Caco-2 (cell line): ENCODE measurements at regions of chr10 and their contacts with region 1.

Region 1: DNA sequence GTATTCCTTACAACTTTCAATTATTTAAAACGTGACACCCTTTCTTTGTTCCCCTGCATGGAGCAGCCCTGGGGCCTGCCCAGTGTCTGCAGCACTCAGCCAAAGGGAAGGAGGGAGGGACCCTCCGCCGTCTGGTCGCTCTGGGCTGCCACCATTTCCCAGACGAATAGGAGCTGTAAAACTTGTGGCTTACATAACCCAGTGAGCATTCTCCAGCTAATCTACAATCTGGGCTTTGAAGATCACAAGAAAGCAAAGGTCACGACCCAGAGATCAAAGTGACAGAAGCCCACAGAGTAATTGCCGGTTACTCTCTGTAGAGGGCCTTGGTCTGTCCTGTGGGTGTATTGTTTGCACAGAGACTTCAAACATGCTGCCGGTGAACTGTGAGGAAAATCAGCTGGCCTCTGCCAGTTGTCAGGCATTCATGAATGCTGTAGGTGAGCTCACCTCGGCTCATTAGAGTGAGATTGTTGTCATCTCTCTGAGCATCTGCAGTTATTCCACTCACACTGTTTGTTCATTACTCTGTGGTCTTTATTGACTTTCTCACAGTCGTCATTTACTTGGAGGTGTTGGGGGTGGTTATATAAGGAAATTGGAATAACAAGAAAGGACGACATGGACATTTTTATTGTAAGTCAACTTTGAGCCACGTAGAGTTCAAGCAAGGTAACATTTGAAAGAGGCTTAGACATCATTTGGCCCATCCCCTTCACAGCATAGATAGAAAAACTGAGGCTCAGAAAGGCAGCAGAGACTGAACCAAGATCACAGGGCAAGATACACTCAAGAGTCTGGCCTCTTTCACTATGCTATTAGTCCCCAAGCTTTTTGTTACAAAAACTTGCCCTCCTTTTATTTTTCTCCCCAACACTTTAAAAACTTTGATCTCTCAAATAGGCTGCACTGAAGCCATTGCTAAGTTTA is 619.8 kb downstream of the LRMDA start:
- DNase-seq: peak; percentile 95 to 97
- H3K4me3 ChIP-seq: no peak overlapping the region
- H3K4me3 Mint-ChIP-seq: peak overlapping the region; percentile 56
- H3K27ac Mint-ChIP-seq: peak overlapping the region; percentile 93
- H3K4me1 ChIP-seq: peaks cover 39% of the 10 kb centered on the region
- H3K4me1 Mint-ChIP-seq: peaks cover 36% of the 10 kb centered on the region
- H3K27me3 ChIP-seq: no peaks in the 10 kb centered on the region
- H3K27me3 Mint-ChIP-seq: no peaks in the 10 kb centered on the region
- CTCF ChIP-seq: peak in 1 of 2 experiments; percentile 17

Region 2: DNA sequence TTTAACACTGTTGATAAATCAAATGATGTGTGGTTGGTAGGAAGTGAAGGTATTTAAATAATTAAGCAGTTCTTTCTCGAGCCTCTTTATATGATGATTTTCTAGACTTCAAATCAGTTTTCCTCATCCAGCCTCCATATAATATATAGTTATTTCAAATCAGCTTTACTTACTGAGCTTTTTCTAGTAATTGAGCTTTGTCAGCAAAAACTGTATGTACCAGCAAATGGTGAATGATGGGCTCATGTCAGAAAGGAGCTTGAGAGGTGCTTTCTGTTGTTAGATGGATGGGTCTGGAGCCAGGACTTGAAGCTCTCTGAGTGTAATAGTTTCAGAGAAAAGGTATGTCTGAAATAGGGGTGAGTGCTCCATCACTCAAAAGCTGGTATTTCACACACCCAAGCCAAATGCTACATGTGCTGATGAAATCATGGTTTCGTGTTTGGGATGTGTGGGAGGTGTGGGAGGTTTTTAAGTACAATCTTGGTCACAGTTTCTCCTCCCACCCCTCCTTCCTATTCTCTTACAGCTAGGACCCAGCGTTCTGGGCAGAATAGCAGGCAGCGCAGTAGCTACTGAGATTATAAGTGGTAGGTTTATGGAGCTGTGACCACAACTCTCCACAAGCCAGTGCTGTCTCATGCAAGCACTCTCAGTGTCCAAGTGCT is 564.1 kb before region 1 on chr10:
- CTCF ChIA-PET with region 1: no interaction called
- POLR2A ChIA-PET with region 1: no interaction called
- intact Hi-C with region 1: no loop called
- DNase-seq: no peak
- H3K4me3 ChIP-seq: no peak overlapping the region
- H3K4me3 Mint-ChIP-seq: no peak overlapping the region
- H3K27ac Mint-ChIP-seq: no peak overlapping the region
- H3K4me1 ChIP-seq: no peaks in the 10 kb centered on the region
- H3K4me1 Mint-ChIP-seq: no peaks in the 10 kb centered on the region
- H3K27me3 ChIP-seq: no peaks in the 10 kb centered on the region
- H3K27me3 Mint-ChIP-seq: no peaks in the 10 kb centered on the region
- CTCF ChIP-seq: no peak

Region 3: GRCh38 chr10:76036111-76036940 is 14.9 kb before region 1 on chr10:
- CTCF ChIA-PET with region 1: interaction called, 8 read pairs
- POLR2A ChIA-PET with region 1: no interaction called
- intact Hi-C with region 1: loop called (anchors 1 kb)
- DNase-seq: peak; percentile 56 to 66
- H3K4me3 ChIP-seq: no peak overlapping the region
- H3K4me3 Mint-ChIP-seq: no peak overlapping the region
- H3K27ac Mint-ChIP-seq: no peak overlapping the region
- H3K4me1 ChIP-seq: peaks cover 14% of the 10 kb centered on the region
- H3K4me1 Mint-ChIP-seq: peaks cover 21% of the 10 kb centered on the region
- H3K27me3 ChIP-seq: no peaks in the 10 kb centered on the region
- H3K27me3 Mint-ChIP-seq: no peaks in the 10 kb centered on the region
- CTCF ChIP-seq: peak; percentile 65 to 66

Region 4: GRCh38 chr10:76071653-76072365 is 20.5 kb after region 1 on chr10:
- CTCF ChIA-PET with region 1: no interaction called
- POLR2A ChIA-PET with region 1: no interaction called
- intact Hi-C with region 1: no loop called
- DNase-seq: no peak
- H3K4me3 ChIP-seq: no peak overlapping the region
- H3K4me3 Mint-ChIP-seq: no peak overlapping the region
- H3K27ac Mint-ChIP-seq: no peak overlapping the region
- H3K4me1 ChIP-seq: no peaks in the 10 kb centered on the region
- H3K4me1 Mint-ChIP-seq: no peaks in the 10 kb centered on the region
- H3K27me3 ChIP-seq: no peaks in the 10 kb centered on the region
- H3K27me3 Mint-ChIP-seq: no peaks in the 10 kb centered on the region
- CTCF ChIP-seq: no peak

Region 5: DNA sequence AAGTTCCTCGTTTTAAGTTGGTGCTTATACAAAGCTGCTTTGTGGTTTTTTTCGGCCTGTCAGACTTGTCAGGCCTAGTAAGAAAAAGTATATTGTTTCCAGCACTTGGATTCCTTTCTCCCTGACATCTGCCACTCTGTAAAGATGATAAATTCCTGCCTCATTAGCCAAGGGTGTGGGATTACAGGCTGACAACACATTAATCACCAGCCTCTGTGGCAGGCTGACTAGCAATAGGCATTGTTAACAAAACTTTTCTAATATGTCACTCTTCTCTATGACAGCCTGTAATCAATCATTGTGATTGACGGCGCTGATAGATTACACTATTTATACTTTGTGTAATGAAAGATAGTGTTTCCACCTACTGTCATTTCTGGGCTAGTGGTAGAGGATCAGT is 62.7 kb after region 1 on chr10:
- CTCF ChIA-PET with region 1: interaction called, 7 read pairs
- POLR2A ChIA-PET with region 1: no interaction called
- intact Hi-C with region 1: loop called (anchors 1 kb)
- DNase-seq: peak; percentile 66 to 73
- H3K4me3 ChIP-seq: no peak overlapping the region
- H3K4me3 Mint-ChIP-seq: peak overlapping the region; percentile 47
- H3K27ac Mint-ChIP-seq: peak overlapping the region; percentile 66
- H3K4me1 ChIP-seq: peaks cover 35% of the 10 kb centered on the region
- H3K4me1 Mint-ChIP-seq: peaks cover 44% of the 10 kb centered on the region
- H3K27me3 ChIP-seq: no peaks in the 10 kb centered on the region
- H3K27me3 Mint-ChIP-seq: no peaks in the 10 kb centered on the region
- CTCF ChIP-seq: no peak

Region 6: GRCh38 chr10:76179806-76180205 is 128.5 kb after region 1 on chr10:
- CTCF ChIA-PET with region 1: no interaction called
- POLR2A ChIA-PET with region 1: no interaction called
- intact Hi-C with region 1: loop called (anchors 2 kb)
- DNase-seq: no peak
- H3K4me3 ChIP-seq: no peak overlapping the region
- H3K4me3 Mint-ChIP-seq: no peak overlapping the region
- H3K27ac Mint-ChIP-seq: peak overlapping the region; percentile 62
- H3K4me1 ChIP-seq: peaks cover 32% of the 10 kb centered on the region
- H3K4me1 Mint-ChIP-seq: peaks cover 42% of the 10 kb centered on the region
- H3K27me3 ChIP-seq: no peaks in the 10 kb centered on the region
- H3K27me3 Mint-ChIP-seq: no peaks in the 10 kb centered on the region
- CTCF ChIP-seq: no peak